AG04449 (cell line): ENCODE measurements at regions of chr4 and their contacts with region 1.

Region 1: GRCh38 chr4:15396157-15396800 is 31.6 kb upstream of the C1QTNF7 start:
- DNase-seq: no peak
- H3K4me3 ChIP-seq: no peak overlapping the region
- CTCF ChIP-seq: peak; percentile 60

Region 2: DNA sequence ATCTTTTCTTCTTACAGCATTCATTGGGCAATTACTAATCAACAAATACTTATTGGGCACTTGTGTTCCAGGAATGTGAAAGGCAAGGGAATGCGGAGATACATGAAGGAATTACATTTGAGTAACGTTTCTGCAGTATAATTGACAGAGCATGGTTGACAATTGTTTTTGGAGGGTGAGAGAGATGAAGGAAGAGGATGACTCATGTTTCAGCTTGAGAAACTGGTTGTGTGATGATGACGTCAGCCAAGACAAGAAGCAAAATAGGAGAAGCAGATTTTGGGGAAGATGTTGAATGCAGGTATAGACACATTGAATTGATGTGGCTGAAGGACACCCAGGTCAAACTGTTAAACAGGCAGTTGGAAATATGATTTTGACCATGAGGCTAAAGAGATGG is 402.0 kb before region 1 on chr4:
- CTCF ChIA-PET with region 1: no interaction called
- POLR2A ChIA-PET with region 1: no interaction called
- DNase-seq: no peak
- H3K4me3 ChIP-seq: no peak overlapping the region
- CTCF ChIP-seq: no peak

Region 3: DNA sequence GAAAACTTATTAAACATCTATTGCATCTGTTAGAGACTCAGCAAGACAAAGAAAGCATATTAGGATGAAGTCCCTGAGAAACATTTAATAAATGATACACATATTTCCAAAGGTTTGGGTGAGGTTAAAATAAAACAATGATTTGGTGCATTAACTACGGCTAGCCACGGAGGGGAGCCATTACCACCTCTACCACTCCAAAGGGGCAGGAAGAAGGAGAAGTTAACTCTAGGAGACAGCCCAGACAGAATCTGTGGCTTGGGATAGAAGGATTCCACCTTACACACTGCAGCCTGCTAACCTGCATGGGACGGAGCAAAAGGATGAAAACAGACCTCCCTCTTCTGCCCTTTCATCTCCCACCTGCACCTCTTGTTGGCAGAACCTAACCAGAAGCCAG is 157.6 kb before region 1 on chr4:
- CTCF ChIA-PET with region 1: interaction called, 43 read pairs
- POLR2A ChIA-PET with region 1: interaction called, 4 read pairs
- DNase-seq: no peak
- H3K4me3 ChIP-seq: no peak overlapping the region
- CTCF ChIP-seq: peak; percentile 60

Region 4: GRCh38 chr4:15375667-15376066 is 20.6 kb before region 1 on chr4:
- CTCF ChIA-PET with region 1: interaction called, 74 read pairs
- POLR2A ChIA-PET with region 1: no interaction called
- DNase-seq: no peak
- H3K4me3 ChIP-seq: no peak overlapping the region
- CTCF ChIP-seq: no peak

Region 5: DNA sequence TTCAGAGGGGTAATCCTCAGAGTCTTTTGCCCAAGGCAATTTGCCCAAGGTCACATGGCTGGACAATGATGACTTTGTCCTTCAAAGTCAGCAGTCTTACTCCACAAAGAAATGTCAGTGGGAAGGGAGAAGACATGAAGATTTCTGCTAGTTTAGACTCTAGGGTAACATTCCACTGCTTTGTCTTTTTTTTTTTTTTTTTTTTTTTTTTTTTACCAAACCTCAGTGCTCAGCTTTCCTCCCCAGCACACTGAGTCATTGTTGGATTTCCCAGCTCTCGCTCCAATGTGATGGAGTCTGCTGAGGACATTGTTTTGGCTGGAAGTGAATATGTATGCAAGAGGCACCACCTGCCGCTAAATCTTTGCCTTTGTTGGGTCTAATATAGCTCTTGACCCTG is 24.4 kb after region 1 on chr4:
- CTCF ChIA-PET with region 1: interaction called, 12 read pairs
- POLR2A ChIA-PET with region 1: no interaction called
- DNase-seq: no peak
- H3K4me3 ChIP-seq: no peak overlapping the region
- CTCF ChIP-seq: no peak

Region 6: DNA sequence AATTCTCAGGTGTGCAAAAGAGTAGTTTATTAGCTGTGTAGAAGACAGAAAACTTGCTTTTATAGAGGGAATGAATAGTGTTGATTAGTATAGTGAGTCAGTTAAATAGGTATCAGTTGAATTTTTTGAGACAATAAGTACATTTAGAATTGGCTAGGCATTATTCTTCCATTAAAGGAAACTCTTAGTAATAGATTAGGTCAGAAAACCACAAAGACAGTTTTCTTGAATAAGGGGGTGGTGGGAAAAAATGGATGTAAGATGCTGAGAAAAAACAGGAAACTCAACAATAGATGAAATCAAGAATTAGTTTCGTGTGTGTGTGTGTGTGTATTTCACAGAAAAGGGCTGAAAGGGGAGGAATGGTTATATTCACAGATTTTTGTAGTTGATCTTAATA is 398.6 kb after region 1 on chr4:
- CTCF ChIA-PET with region 1: no interaction called
- POLR2A ChIA-PET with region 1: no interaction called
- DNase-seq: no peak
- H3K4me3 ChIP-seq: no peak overlapping the region
- CTCF ChIP-seq: no peak

Region 7: GRCh38 chr4:15963001-15963451 is 566.7 kb after region 1 on chr4 and contains the start of gene FGFBP2:
- CTCF ChIA-PET with region 1: no interaction called
- POLR2A ChIA-PET with region 1: no interaction called
- DNase-seq: peak; percentile 5
- H3K4me3 ChIP-seq: no peak within 1 kb of the TSS
- CTCF ChIP-seq: peak; percentile 79